Panc1 (cell line): ENCODE measurements at regions of chr19 and their contacts with region 1.

Region 1: DNA sequence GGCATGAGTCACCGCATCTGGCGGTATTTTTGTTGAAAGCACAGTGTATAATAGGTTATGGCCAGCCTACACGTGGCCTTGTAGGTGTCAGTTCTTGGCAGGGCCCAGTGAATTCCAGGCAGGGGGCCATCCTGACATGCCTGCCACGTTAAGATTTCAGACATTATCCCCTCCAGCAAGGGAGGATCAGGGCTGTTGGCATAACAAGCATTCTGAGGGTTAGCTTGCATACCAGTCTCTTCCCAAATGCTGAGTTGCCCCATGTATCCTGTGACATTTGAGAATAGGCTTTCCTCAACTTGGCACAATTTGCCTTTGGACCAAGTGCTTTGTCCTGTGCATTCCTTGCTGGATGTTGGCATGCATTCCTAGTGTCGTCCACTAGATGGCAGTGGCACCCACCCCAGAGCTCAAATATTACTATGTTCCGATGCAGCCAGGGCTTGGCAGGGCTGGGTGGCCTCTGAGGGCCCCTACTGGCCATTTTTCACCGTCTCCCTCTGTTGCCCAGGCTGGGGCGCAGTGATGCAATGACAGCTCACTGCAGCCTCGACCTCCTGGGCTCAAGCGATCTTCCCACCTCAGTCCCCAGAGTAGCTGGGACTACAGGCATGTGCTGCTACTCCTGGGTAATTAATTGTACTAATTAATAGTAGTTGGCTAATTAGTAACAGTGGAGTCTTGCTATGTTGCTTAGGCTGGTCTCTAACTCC is 31.2 kb downstream of the NLRP12 start:
- DNase-seq: peak; percentile 89
- ATAC-seq: peak; percentile 100
- H3K4me3 ChIP-seq: peak overlapping the region in 1 of 2 experiments; percentile 26; a peak in 2 of 4 replicates
- H3K27ac ChIP-seq: no peak overlapping the region
- H3K4me1 ChIP-seq: no peaks in the 10 kb centered on the region
- H3K27me3 ChIP-seq: no peaks in the 10 kb centered on the region
- CTCF ChIP-seq: peak; percentile 100

Region 2: DNA sequence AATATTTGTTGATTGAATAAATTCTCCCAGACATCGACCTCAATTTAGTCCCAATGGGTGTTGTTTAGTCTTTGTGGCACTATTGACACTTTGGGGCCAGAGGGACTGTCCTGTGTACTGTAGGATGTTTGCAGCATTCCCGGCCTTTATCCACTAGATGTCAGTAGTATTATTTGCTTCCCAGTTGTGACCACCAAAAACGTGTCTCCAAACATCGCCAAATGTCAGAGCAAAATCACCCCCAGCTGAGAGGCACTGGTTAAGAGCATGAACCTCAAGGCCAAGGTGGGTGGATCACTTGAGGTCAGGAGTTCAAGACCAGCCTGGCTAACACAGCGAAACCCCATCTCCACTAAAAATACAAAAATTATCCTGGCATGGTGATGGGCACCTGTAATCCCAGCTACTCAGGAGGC is 15.8 kb after region 1 on chr19:
- CTCF ChIA-PET with region 1: interaction called, 16 read pairs
- POLR2A ChIA-PET with region 1: no interaction called
- in situ Hi-C with region 1: no loop called
- intact Hi-C with region 1: no loop called
- DNase-seq: peak; percentile 33
- ATAC-seq: peak; percentile 91
- H3K4me3 ChIP-seq: no peak overlapping the region
- H3K27ac ChIP-seq: no peak overlapping the region
- H3K4me1 ChIP-seq: no peaks in the 10 kb centered on the region
- H3K27me3 ChIP-seq: no peaks in the 10 kb centered on the region
- CTCF ChIP-seq: peak; percentile 63; the same call in 1 of the 2 replicates

Region 3: DNA sequence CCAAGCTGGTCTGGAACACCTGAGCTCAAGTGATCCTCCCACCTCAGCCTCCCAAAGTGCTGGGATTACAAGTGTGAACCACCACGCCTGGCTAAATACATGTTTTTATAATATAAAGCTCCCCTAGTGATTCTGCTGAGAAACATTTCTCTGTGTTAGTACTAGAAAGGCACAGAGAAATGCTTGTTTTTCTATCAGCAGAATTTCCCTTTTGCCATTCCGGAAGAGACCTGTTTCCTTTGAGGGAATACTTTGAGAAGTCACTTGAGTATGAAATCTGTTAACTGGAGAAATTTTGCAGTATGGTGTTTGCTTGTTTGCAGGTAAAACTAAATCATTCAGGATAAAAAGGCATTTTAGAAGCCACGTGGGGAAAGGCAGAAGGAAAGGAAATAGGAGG is 35.7 kb after region 1 on chr19:
- CTCF ChIA-PET with region 1: no interaction called
- POLR2A ChIA-PET with region 1: no interaction called
- in situ Hi-C with region 1: no loop called
- intact Hi-C with region 1: no loop called
- DNase-seq: no peak
- ATAC-seq: no peak
- H3K4me3 ChIP-seq: no peak overlapping the region
- H3K27ac ChIP-seq: no peak overlapping the region
- H3K4me1 ChIP-seq: no peaks in the 10 kb centered on the region
- H3K27me3 ChIP-seq: no peaks in the 10 kb centered on the region
- CTCF ChIP-seq: no peak

Region 4: GRCh38 chr19:54077334-54077733 is 284.5 kb after region 1 on chr19:
- CTCF ChIA-PET with region 1: interaction called, 14 read pairs
- POLR2A ChIA-PET with region 1: no interaction called
- in situ Hi-C with region 1: no loop called
- intact Hi-C with region 1: no loop called
- DNase-seq: no peak
- ATAC-seq: no peak
- H3K4me3 ChIP-seq: no peak overlapping the region
- H3K27ac ChIP-seq: no peak overlapping the region
- H3K4me1 ChIP-seq: no peaks in the 10 kb centered on the region
- H3K27me3 ChIP-seq: no peaks in the 10 kb centered on the region
- CTCF ChIP-seq: no peak